GM10248 (cell line): ENCODE measurements at regions of chr10 and their contacts with region 1.

Region 1: GRCh38 chr10:95907456-95908253 is at the start of gene CC2D2B:
- DNase-seq: peak; percentile 84
- CTCF ChIP-seq: no peak

Region 2: GRCh38 chr10:95925033-95925432 is 17.4 kb after region 1 on chr10:
- CTCF ChIA-PET with region 1: interaction called, 10 read pairs
- POLR2A ChIA-PET with region 1: no interaction called
- DNase-seq: no peak
- CTCF ChIP-seq: no peak

Region 3: DNA sequence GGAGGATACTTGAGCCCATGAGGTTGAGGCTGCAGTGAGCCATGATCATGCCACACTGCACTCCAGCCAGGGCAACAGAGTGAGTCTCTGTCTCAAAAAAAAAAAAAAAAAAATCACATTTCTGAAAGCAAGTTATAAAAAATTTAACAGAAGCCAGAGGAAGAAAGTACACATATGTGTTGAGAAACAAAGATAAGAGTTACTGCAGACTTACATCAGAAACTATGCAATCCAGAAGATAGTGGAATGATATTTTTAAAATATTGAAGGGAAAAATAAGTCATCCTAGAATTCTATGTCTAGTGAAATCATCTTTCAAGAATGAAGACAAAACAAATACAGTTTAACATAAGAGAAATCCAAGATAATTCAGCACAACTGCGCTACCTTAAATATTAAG is 269.3 kb after region 1 on chr10:
- CTCF ChIA-PET with region 1: no interaction called
- POLR2A ChIA-PET with region 1: no interaction called
- DNase-seq: no peak
- CTCF ChIP-seq: no peak